ENCODE measurements at regions of chr14 and their contacts with region 1.

Region 1: DNA sequence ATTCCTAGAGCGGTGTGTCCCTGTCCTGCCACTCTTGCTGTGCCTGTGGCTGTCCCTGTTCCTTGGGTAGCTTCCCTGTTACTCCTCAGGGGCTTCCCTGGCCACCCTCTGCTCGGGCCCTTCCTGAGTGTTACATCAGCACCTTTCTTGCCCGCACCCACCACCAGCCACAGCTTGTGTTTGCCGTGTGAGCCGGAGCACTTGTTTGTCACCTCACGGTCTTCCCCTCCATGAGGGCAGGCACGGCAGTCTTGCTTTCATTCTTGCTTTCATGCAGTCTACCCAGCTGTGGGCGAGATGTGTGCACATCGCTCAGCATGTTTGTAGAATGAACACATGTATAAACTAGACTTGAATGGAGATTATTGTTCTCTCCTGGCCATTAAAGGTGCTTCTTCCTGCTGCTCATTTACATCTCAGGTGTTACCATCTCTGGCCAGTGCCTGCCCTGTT is 42.0 kb downstream of the TRAF3 start:
- DNase-seq: peak; percentile 70
- H3K4me3 Mint-ChIP-seq: peak overlapping the region; percentile 81
- H3K27ac Mint-ChIP-seq: peak overlapping the region; percentile 88
- H3K4me1 Mint-ChIP-seq: peaks cover 85% of the 10 kb centered on the region
- H3K27me3 Mint-ChIP-seq: no peaks in the 10 kb centered on the region

Region 2: DNA sequence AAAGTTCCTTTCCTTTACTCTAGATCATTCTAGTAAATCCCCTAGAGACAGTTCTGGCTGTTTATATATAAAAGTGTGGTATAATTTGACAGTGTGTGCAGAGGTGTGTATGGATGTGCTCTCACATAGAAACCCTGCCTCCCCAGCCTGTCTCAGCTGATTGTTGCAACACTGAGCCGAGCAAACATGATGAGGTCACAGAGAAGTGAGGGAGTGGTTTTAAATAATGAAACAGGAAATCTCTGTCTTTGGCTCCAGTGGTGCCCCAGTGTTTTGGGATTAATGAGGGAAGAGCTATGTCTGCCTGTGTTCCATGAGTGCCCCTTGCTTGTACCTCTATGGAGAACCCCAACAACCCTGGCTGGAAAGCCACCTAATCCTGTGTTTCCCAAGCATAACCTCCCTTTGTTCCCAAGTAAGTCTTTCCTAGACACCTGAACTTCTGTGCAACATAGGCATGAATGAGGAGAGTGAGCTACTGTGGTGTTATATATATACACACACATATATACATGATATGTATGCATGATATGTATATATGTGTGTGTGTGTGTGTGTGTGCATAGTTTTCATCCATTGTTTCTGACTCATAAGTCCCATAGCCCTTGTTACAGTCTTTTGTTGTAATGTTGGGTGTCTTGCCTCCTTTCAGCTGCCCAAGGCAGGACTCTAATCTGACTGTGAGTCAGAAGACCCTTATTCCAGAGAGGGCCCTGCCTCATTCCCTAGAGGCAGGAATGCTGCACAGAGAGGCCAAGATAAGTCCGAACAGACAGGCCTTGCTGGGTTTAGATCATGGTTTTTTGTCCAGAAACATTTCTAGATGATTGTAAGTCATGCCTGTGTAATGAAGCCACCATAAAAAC is 23.9 kb before region 1 on chr14:
- intact Hi-C with region 1: loop called (anchors 1 kb)
- DNase-seq: no peak
- H3K4me3 Mint-ChIP-seq: peak overlapping the region; percentile 54
- H3K27ac Mint-ChIP-seq: peak overlapping the region; percentile 78
- H3K4me1 Mint-ChIP-seq: peaks cover 56% of the 10 kb centered on the region
- H3K27me3 Mint-ChIP-seq: no peaks in the 10 kb centered on the region

Region 3: GRCh38 chr14:102805371-102806246 is 13.6 kb before region 1 on chr14:
- intact Hi-C with region 1: loop called (anchors 1 kb)
- DNase-seq: peak; percentile 47
- H3K4me3 Mint-ChIP-seq: peak overlapping the region; percentile 71
- H3K27ac Mint-ChIP-seq: peak overlapping the region; percentile 95
- H3K4me1 Mint-ChIP-seq: peaks cover 64% of the 10 kb centered on the region
- H3K27me3 Mint-ChIP-seq: no peaks in the 10 kb centered on the region

Region 4: GRCh38 chr14:102831163-102831804 is 12.1 kb after region 1 on chr14:
- intact Hi-C with region 1: loop called (anchors 1 kb)
- DNase-seq: no peak
- H3K4me3 Mint-ChIP-seq: peak overlapping the region; percentile 43
- H3K27ac Mint-ChIP-seq: peak overlapping the region; percentile 53
- H3K4me1 Mint-ChIP-seq: peaks cover 63% of the 10 kb centered on the region
- H3K27me3 Mint-ChIP-seq: no peaks in the 10 kb centered on the region

Region 5: DNA sequence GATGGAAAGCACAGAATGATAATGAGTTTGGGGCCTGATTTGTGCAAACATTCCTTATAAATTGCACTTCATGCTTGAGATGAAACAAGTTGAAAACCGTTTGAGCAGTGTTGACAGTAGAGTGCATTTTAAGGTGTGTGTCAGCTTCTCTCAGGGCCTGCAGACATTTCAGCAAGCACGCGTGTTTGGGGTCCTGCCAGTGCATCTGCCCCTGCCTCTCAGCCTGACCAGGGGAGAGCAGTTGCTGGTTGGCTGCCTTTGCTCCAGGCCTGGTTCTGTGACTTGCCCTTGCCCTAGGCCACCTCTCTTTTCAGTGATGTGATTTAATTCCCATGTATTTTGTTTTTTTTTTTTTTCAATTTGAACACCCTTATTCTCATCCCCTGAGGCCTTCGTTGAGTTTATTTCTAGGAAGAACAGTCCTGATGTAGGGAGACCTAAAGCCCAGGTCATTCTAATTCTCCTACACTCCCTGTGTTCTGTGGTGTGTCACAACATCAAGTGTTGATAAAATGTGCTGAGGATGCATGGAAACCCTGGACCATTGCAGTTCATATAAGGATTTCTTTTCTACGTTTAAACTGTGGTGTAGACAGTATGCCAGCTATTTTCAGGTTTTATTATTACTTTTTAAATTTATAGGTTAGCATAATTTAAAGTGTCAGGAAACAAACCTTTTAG is 63.2 kb after region 1 on chr14:
- intact Hi-C with region 1: loop called (anchors 1 kb)
- DNase-seq: no peak
- H3K4me3 Mint-ChIP-seq: no peak overlapping the region
- H3K27ac Mint-ChIP-seq: peak overlapping the region; percentile 37
- H3K4me1 Mint-ChIP-seq: peaks cover 10% of the 10 kb centered on the region
- H3K27me3 Mint-ChIP-seq: no peaks in the 10 kb centered on the region